CD4-positive, alpha-beta memory T cell (primary cell): ENCODE measurements at regions of chr11 and their contacts with region 1.

Region 1: DNA sequence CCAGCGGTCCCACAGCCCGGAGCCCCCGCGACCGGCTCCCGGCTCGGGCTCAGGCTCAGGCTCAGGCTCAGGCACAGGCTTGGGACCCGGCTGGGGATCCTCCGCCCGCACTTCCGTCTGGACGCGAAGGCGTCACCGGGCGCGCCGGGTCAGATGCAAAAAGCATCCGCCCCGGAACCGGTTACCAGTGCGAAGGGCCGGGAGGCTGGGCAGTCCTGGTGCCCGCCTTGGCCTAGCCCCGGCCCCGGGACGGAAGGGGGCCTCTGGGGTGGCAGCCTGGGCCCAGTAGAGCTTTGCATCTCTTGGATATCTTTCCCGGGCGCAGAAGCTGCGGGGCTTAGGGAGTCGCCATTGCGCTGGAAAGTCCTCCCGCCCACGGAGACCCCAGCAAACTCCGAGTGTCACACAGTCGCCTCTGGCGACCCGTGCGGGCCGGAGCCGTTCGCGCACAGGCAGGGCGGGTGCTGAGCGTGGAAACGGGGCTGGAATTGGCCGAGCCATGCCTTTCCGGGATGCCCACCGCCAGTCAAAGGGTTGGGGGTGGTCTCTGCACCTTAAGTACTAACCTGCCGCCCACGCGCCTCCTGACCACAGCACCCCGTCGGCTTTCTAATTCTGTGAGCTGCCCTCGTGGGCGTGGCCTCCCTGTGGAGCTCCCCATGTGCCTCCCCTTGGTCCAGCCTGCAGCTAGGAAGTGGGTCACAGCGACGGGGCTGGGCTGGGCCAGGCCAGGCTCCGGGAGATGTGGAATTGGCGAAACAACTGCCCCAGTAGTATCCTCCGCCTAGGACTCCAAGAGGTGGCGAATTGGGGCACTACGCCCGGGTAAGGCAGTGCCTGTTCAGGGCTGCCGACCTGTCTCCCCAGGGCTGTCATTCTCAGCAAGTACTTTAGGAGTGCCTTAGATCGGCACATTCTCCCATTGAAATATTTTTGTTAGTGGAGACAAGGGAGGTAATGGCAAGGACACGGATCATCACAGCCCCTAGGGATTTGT is at the start of gene TMEM9B:
- DNase-seq: peak; percentile 72 to 83 (median 76)
- H3K4me3 ChIP-seq: peak within 1 kb of the TSS; percentile 89 to 91
- H3K4me3 Mint-ChIP-seq: peak within 1 kb of the TSS; percentile 93 to 98 (median 97)
- H3K27ac ChIP-seq: peak within 1 kb of the TSS; percentile 90
- H3K27ac Mint-ChIP-seq: peak within 1 kb of the TSS; percentile 91 to 99 (median 98)
- H3K4me1 ChIP-seq: peaks cover 26% of the 10 kb centered on the region
- H3K4me1 Mint-ChIP-seq: peaks cover 20 to 41% (median 30%) of the 10 kb centered on the region in 4 donors
- H3K27me3 ChIP-seq: no peaks in the 10 kb centered on the region
- H3K27me3 Mint-ChIP-seq: no peaks in the 10 kb centered on the region
- total RNA-seq, gene TMEM9B: 36.8 to 38.9 TPM

Region 2: GRCh38 chr11:8682303-8683114 is 282.1 kb before region 1 on chr11 and contains the starts of genes RPL27A and TRIM66:
- CTCF ChIA-PET with region 1: no interaction called
- POLR2A ChIA-PET with region 1: interaction called, 23 read pairs
- intact Hi-C with region 1: loop called (anchors 1 kb)
- DNase-seq: peak; percentile 98 to 99 (median 98)
- H3K4me3 ChIP-seq: peak within 1 kb of the TSS; percentile 61 to 87
- H3K4me3 Mint-ChIP-seq: peak within 1 kb of the TSS; percentile 89 to 99 (median 96)
- H3K27ac ChIP-seq: peak within 1 kb of the TSS; percentile 96
- H3K27ac Mint-ChIP-seq: peak within 1 kb of the TSS; percentile 97 to 99 (median 98)
- H3K4me1 ChIP-seq: peaks cover 34% of the 10 kb centered on the region
- H3K4me1 Mint-ChIP-seq: peaks cover 28 to 72% (median 40%) of the 10 kb centered on the region in 4 donors
- H3K27me3 ChIP-seq: no peaks in the 10 kb centered on the region
- H3K27me3 Mint-ChIP-seq: no peaks in the 10 kb centered on the region
- total RNA-seq, gene RPL27A: 1,456 to 1,504 TPM
- total RNA-seq, gene TRIM66: 25.0 to 31.3 TPM

Region 3: GRCh38 chr11:8948886-8949285 is 15.7 kb before region 1 on chr11:
- CTCF ChIA-PET with region 1: interaction called, 19 read pairs
- POLR2A ChIA-PET with region 1: interaction called, 3 read pairs
- intact Hi-C with region 1: no loop called
- DNase-seq: no peak
- H3K4me3 ChIP-seq: no peak overlapping the region
- H3K4me3 Mint-ChIP-seq: no peak overlapping the region
- H3K27ac ChIP-seq: no peak overlapping the region
- H3K27ac Mint-ChIP-seq: no peak overlapping the region
- H3K4me1 ChIP-seq: no peaks in the 10 kb centered on the region
- H3K4me1 Mint-ChIP-seq: no peaks in the 10 kb centered on the region
- H3K27me3 ChIP-seq: no peaks in the 10 kb centered on the region
- H3K27me3 Mint-ChIP-seq: peaks cover 0 to 2% of the 10 kb centered on the region in 2 donors

Region 4: DNA sequence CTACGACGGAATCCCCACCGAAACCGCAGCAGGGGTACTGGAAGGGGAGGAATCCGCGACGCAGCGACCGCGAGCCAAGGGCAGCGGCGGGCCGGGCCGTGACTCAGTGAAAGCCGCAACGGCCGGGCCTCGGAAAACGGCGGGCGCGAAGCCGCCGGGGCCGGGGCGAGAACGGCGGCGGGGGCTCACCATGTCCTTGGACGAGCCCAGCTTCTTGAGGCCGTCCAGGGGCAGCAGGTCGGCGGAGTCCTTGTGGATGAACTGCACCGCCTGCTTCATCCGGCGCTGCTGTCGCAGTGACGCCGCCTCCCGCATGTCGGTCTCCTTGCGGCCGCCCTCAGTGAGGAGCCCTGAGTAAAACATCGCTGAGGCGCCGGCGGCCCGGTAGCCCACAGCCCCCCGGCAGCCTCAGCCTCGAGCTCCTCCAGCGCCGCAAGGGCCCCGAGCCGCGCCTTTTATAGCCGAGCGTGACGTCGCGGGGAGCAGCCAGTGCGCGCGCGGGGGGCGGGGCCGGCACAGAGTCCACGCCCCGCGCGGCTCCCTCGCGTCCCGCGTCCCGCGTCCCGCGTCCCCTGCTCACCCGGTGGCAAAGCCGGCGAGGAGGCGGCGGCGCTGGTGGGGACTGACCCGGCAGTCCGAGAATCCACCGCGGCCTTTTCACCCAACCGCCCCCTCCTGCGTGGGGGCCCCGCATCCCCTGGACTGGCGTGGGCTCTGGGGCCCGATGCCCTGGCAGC is 39.1 kb after region 1 on chr11 and contains the start of gene NRIP3:
- CTCF ChIA-PET with region 1: interaction called, 4 read pairs
- POLR2A ChIA-PET with region 1: interaction called, 14 read pairs
- intact Hi-C with region 1: loop called (anchors 1 kb)
- DNase-seq: peak; percentile 79 to 88 (median 82)
- H3K4me3 ChIP-seq: peak within 1 kb of the TSS; percentile 30 to 41
- H3K4me3 Mint-ChIP-seq: peak within 1 kb of the TSS; percentile 79 to 91 (median 86)
- H3K27ac ChIP-seq: no peak within 1 kb of the TSS
- H3K27ac Mint-ChIP-seq: peak within 1 kb of the TSS; percentile 57 to 87 (median 79)
- H3K4me1 ChIP-seq: peaks cover 16% of the 10 kb centered on the region
- H3K4me1 Mint-ChIP-seq: peaks cover 12 to 28% (median 18%) of the 10 kb centered on the region in 4 donors
- H3K27me3 ChIP-seq: peaks cover 19% of the 10 kb centered on the region
- H3K27me3 Mint-ChIP-seq: peaks cover 11 to 22% of the 10 kb centered on the region in 2 donors
- total RNA-seq, gene NRIP3: 1.5 to 1.7 TPM

Region 5: DNA sequence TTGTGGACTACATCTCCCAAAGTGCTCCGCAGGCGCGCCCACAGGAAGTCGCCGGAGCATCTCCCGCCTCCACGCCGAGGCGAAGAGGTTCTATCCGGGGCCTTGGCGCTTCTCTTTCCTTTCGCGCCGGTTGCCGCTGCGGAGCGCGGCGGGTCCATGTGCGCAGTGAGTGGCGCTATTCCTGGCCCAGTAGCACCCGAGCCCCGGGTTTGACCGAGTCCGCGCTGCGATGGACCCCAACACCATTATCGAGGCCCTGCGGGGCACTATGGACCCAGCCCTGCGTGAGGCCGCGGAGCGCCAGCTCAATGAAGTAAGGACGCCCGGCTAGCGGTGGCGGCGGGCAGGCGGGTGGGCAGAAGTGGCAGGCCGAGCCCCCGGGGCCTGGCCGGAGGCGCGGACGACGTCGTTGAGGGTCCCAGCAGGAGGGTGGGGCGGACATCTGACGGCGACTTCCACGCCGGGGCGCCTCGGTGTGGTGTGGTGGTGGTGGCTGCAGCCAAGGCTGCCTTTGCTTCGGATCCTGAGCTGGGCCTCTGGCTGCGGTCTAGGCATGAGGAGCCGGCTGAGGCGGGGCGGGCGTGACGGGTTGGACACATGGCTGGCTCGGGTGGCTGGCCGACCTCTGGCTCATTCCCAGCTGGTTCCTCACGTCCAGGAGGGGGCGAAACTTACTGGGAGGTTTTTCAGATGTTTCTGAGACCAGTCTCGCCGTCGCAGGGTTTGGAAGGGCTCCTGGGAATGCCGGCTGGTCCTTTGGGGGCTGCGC is 420.1 kb after region 1 on chr11 and contains the start of gene IPO7:
- CTCF ChIA-PET with region 1: no interaction called
- POLR2A ChIA-PET with region 1: no interaction called
- intact Hi-C with region 1: loop called (anchors 1 kb)
- DNase-seq: peak; percentile 84 to 89 (median 86)
- H3K4me3 ChIP-seq: peak within 1 kb of the TSS; percentile 92 to 97
- H3K4me3 Mint-ChIP-seq: peak within 1 kb of the TSS; percentile 92 to 98 (median 94)
- H3K27ac ChIP-seq: peak within 1 kb of the TSS; percentile 86
- H3K27ac Mint-ChIP-seq: peak within 1 kb of the TSS; percentile 92 to 96 (median 94)
- H3K4me1 ChIP-seq: peaks cover 29% of the 10 kb centered on the region
- H3K4me1 Mint-ChIP-seq: peaks cover 23 to 43% (median 34%) of the 10 kb centered on the region in 4 donors
- H3K27me3 ChIP-seq: no peaks in the 10 kb centered on the region
- H3K27me3 Mint-ChIP-seq: no peaks in the 10 kb centered on the region
- total RNA-seq, gene IPO7: 63.4 to 67.0 TPM